Activated CD4-positive, alpha-beta T cell treated with anti-CD3 and anti-CD28 coated beads, Interleukin-2, amount 10 ng/mL, durations not matched to agents 24 days and 14 days (primary cell): ENCODE measurements at regions of chr1 and their contacts with region 1.

Region 1: GRCh38 chr1:192580351-192580962 is 4.9 kb downstream of the RGS1 start:
- DNase-seq: peak; percentile 78
- H3K4me3 Mint-ChIP-seq: peak overlapping the region; percentile 19
- H3K27ac Mint-ChIP-seq: no peak overlapping the region
- H3K4me1 Mint-ChIP-seq: peaks cover 37% of the 10 kb centered on the region
- H3K27me3 Mint-ChIP-seq: peaks cover 9% of the 10 kb centered on the region

Region 2: DNA sequence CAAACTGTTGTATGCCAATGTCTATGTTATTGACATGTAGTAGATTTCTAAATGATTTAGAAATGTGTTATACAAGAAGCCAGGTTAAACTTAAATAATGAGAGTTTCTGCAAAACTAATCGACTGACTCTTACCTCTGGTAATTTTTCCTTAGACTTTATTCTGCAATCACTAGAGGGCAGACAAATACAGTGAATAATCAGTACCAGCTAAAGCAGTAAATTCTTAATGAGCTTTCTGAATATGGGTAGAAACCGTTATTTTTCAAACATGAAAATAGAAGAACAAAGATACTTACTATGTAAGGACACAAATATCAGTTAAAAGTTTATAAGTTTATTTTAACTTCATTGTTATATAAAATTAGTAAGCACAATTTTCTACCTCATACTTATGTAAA is 102.8 kb before region 1 on chr1:
- intact Hi-C with region 1: loop called (anchors 1 kb)
- DNase-seq: no peak
- H3K4me3 Mint-ChIP-seq: no peak overlapping the region
- H3K27ac Mint-ChIP-seq: no peak overlapping the region
- H3K4me1 Mint-ChIP-seq: peaks cover 2% of the 10 kb centered on the region
- H3K27me3 Mint-ChIP-seq: peaks cover 7% of the 10 kb centered on the region

Region 3: DNA sequence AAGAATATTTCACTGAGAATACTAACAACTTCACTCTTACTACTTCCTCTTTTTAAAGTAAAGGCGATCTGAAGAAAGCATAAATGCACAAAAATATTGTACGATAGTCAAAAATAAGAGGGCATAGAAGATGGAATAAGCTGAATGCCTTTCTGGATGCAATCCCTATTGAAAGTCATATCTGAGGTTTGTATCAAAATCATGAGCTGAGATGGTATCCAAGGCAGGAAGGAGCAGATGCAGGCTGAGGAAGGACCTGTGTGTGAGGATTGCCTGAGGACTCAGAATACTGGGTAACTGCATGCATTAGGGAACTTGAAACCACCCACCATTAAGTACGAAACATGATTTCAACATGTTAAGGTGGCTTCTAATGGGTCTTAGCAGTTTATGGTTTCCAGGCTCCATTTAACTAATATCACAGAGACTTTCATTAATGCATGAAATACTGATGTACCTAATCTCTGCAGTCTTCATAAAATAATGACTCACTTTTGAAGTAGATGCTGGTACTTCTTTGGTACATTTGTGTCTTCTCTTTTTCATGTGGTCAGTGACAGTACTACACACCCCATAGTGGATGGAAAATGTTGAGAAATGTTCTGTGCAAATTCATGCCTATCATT is 34.4 kb before region 1 on chr1:
- intact Hi-C with region 1: loop called (anchors 1 kb)
- DNase-seq: no peak
- H3K4me3 Mint-ChIP-seq: peak overlapping the region; percentile 14
- H3K27ac Mint-ChIP-seq: peak overlapping the region; percentile 56
- H3K4me1 Mint-ChIP-seq: peaks cover 51% of the 10 kb centered on the region
- H3K27me3 Mint-ChIP-seq: no peaks in the 10 kb centered on the region

Region 4: DNA sequence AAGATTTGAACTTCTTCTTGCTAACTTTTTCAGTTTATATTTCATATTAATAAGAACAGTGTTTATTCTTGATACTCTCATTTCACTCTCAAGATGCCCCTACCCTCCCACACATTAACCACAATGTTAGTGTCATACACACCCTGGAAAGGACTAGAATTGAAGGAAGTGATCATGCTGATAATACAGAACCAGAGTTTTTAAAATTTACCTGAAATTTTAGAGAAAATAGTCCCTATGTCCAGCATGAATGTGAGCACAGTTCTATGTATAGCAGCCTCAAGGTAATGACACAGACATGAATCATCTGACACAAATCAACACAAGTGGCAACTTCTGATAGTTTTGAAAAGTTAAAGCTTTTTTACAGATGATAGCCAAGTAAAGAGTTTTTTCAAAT is 21.1 kb after region 1 on chr1:
- intact Hi-C with region 1: loop called (anchors 2 kb)
- DNase-seq: no peak
- H3K4me3 Mint-ChIP-seq: no peak overlapping the region
- H3K27ac Mint-ChIP-seq: no peak overlapping the region
- H3K4me1 Mint-ChIP-seq: peaks cover 10% of the 10 kb centered on the region
- H3K27me3 Mint-ChIP-seq: peaks cover 2% of the 10 kb centered on the region

Region 5: GRCh38 chr1:192609110-192610079 is 28.9 kb after region 1 on chr1:
- intact Hi-C with region 1: loop called (anchors 2 kb)
- DNase-seq: peak; percentile 85
- H3K4me3 Mint-ChIP-seq: peak overlapping the region; percentile 63
- H3K27ac Mint-ChIP-seq: peak overlapping the region; percentile 28
- H3K4me1 Mint-ChIP-seq: peaks cover 13% of the 10 kb centered on the region
- H3K27me3 Mint-ChIP-seq: no peaks in the 10 kb centered on the region

Region 6: GRCh38 chr1:192639607-192640368 is 59.3 kb after region 1 on chr1:
- intact Hi-C with region 1: loop called (anchors 2 kb)
- DNase-seq: no peak
- H3K4me3 Mint-ChIP-seq: no peak overlapping the region
- H3K27ac Mint-ChIP-seq: no peak overlapping the region
- H3K4me1 Mint-ChIP-seq: peaks cover 4% of the 10 kb centered on the region
- H3K27me3 Mint-ChIP-seq: peaks cover 4% of the 10 kb centered on the region